ENCODE measurements at regions of chr7 and their contacts with region 1.

Region 1: GRCh38 chr7:92206019-92206418 is 27.1 kb upstream of the LRRD1 start:
- DNase-seq: no peak
- ATAC-seq: no peak

Region 2: DNA sequence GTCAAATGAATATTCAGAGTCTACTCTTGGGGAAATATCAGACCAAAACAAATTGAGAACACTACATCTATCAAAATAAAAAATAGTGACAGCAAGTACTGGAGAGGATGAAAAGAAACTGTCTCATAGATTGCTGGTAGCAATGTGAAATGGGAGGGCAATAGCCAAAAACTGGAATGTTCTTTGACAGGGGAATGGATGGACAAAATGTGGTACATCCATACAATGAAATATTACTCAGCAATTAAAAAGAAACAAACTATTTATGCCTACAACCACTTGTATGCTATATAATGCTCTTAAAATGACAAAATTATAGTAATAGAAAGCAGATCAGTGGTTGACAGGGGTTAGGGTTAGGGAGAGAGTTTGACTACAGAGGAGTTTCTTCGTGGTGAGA is 117.8 kb before region 1 on chr7:
- intact Hi-C with region 1: loop called (anchors 10 kb)
- DNase-seq: no peak
- ATAC-seq: no peak

Region 3: GRCh38 chr7:92691578-92691977 is 485.6 kb after region 1 on chr7:
- intact Hi-C with region 1: no loop called
- DNase-seq: no peak
- ATAC-seq: no peak

Measured in left ventricle myocardium superior (tissue), 1 donor.